ENCODE measurements at regions of chr11 and their contacts with region 1.

Region 1: GRCh38 chr11:10792398-10792975 is 16.2 kb downstream of the EIF4G2 start:
- DNase-seq: peak; percentile 95
- H3K4me3 ChIP-seq: peak overlapping the region; percentile 6 to 42 (median 16)
- H3K27ac ChIP-seq: no peak overlapping the region
- H3K4me1 ChIP-seq: peaks cover 7 to 9% (median 9%) of the 10 kb centered on the region in 4 donors
- H3K27me3 ChIP-seq: no peaks in the 10 kb centered on the region
- CTCF ChIP-seq: peak; percentile 88 to 96 (median 92)
- EP300 ChIP-seq: no peak
- POLR2A ChIP-seq: no peak

Region 2: GRCh38 chr11:10916674-10917073 is 124.2 kb after region 1 on chr11:
- intact Hi-C with region 1: loop called (anchors 5 kb)
- DNase-seq: no peak
- H3K4me3 ChIP-seq: no peak overlapping the region
- H3K27ac ChIP-seq: no peak overlapping the region
- H3K4me1 ChIP-seq: peaks cover under 1 to 15% (median 9%) of the 10 kb centered on the region in 4 donors
- H3K27me3 ChIP-seq: no peaks in the 10 kb centered on the region
- CTCF ChIP-seq: no peak
- EP300 ChIP-seq: no peak
- POLR2A ChIP-seq: no peak

Region 3: DNA sequence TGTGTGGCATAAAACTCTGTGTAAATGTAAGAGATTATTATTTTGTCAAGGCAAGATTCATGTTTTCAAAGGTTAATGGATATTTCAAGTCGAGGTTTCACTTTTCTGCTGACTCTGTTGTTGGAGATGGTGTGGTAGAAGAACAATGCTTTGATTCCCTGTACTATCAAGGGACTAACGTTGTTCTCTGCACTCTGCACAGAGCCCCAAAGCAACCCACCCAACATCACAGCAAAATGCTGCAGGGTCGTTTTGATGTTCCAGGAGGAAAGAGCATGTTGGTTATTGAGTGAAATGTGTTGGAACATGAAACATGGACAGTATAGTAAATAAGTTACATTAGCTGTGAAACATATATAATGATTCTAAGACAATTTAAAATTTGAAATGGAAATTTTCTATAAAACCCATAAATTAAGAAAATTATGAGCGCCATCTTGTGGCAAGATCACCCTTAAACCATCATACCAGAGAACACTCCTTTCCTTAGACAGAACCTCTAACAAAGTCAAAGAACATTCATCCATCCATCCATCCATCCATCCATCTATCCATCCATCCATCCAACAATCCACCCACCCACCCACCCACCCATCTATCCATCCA is 229.7 kb after region 1 on chr11:
- intact Hi-C with region 1: loop called (anchors 2 kb)
- DNase-seq: no peak
- H3K4me3 ChIP-seq: no peak overlapping the region
- H3K27ac ChIP-seq: no peak overlapping the region
- H3K4me1 ChIP-seq: peaks cover 0 to 1% (median 0%) of the 10 kb centered on the region in 4 donors
- H3K27me3 ChIP-seq: no peaks in the 10 kb centered on the region
- CTCF ChIP-seq: peak; percentile 50 to 53 (median 50)
- EP300 ChIP-seq: no peak
- POLR2A ChIP-seq: no peak

Region 4: GRCh38 chr11:11787305-11788062 is 995.0 kb after region 1 on chr11:
- intact Hi-C with region 1: loop called (anchors 5 kb)
- DNase-seq: peak; percentile 57
- H3K4me3 ChIP-seq: no peak overlapping the region
- H3K27ac ChIP-seq: no peak overlapping the region
- H3K4me1 ChIP-seq: peaks cover 0 to 17% (median 3%) of the 10 kb centered on the region in 4 donors
- H3K27me3 ChIP-seq: no peaks in the 10 kb centered on the region
- CTCF ChIP-seq: peak; percentile 85 to 95 (median 94)
- EP300 ChIP-seq: no peak
- POLR2A ChIP-seq: no peak

Measured in esophagus muscularis mucosa (tissue), 4 donors.